Aorta (tissue), 5 donors: ENCODE measurements at regions of chr10 and their contacts with region 1.

Region 1: DNA sequence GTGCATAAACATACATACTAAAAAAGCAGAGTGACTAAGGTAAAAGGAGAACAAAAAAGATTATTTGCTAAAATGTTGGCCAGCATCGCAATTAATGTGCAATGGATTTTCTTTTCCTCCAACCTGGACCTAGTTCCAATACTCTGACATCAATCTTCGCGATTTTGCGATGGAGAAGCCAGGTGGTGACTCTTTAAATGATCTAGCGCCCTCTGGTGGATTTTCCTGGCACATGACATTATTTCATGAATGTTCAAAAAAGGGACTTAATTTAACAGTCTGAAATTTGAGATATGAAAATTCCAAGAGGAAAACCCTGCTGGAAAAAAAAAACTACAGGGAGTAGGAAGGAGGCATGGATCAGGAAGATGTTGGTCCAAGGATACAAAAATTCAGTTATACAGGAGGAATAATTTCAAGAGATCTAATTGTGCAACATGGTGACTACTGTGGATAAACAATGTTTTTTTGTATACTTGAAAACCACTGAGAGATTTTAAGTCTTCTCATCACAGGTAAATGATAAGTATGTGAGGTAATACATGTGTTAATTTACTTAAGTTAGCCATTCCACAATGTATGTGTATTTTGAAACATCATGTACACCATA is 4.3 kb upstream of the KCNMA1 start:
- DNase-seq: peak in 1 of 2 donors; percentile 59
- ATAC-seq: peak; percentile 55
- H3K4me3 ChIP-seq: no peak overlapping the region
- H3K27ac ChIP-seq: no peak overlapping the region
- H3K4me1 ChIP-seq: peaks cover 0 to 5% of the 10 kb centered on the region in 2 donors
- H3K27me3 ChIP-seq: no peaks in the 10 kb centered on the region

Region 2: DNA sequence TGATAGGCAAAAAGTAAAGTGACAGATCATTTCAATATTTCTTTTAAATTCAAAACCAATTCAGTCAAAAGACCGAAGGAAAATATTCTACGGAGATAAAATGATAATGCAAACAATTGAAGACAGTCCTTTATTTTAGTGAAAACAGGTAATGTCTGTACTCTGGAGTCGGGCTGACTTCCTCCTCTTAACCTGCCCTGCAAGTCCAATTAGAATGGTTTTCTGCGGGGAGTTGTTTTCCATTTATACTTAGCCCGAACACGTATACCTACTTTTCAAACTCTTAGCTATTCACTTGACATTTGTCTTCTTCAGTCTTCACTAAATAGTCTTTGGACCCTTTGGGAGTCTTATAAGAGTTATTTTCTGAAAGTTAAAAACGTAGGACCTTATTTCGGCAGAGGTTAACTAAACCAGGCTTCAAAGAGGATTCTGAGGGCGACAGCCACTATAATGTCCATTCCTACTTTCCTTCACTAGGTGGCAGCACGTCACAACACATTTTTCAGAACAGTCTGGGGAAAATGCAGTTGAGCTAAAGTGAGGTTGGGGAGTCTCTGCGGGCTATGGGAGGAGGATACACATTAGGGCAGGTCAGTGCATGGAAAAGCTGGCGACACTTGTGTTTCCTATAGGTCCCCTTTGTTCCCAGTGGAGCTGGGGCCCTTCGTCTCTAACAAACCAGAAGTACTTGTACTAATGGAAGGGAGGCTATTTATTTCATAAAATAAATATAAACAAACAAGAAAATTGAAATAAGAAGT is 476.3 kb before region 1 on chr10:
- intact Hi-C with region 1: loop called (anchors 1 to 2 kb)
- DNase-seq: no peak
- ATAC-seq: peak; percentile 80
- H3K4me3 ChIP-seq: peak overlapping the region in 1 of 2 donors; percentile 28
- H3K27ac ChIP-seq: no peak overlapping the region
- H3K4me1 ChIP-seq: peaks cover 5 to 11% of the 10 kb centered on the region in 2 donors
- H3K27me3 ChIP-seq: no peaks in the 10 kb centered on the region

Region 3: GRCh38 chr10:77251297-77252013 is 390.4 kb before region 1 on chr10:
- intact Hi-C with region 1: loop called in 1 of 2 experiments (anchors 5 kb)
- DNase-seq: no peak
- ATAC-seq: no peak
- H3K4me3 ChIP-seq: no peak overlapping the region
- H3K27ac ChIP-seq: no peak overlapping the region
- H3K4me1 ChIP-seq: peaks cover 3 to 8% of the 10 kb centered on the region in 2 donors
- H3K27me3 ChIP-seq: no peaks in the 10 kb centered on the region

Region 4: GRCh38 chr10:77428691-77429395 is 213.1 kb before region 1 on chr10:
- intact Hi-C with region 1: loop called in 1 of 2 experiments (anchors 10 kb)
- DNase-seq: peak; percentile 80 to 81
- ATAC-seq: peak; percentile 85
- H3K4me3 ChIP-seq: no peak overlapping the region
- H3K27ac ChIP-seq: peak overlapping the region in 1 of 2 donors; percentile 30
- H3K4me1 ChIP-seq: peaks cover 3 to 5% of the 10 kb centered on the region in 2 donors
- H3K27me3 ChIP-seq: no peaks in the 10 kb centered on the region

Region 5: GRCh38 chr10:77531441-77532001 is 110.4 kb before region 1 on chr10:
- intact Hi-C with region 1: loop called in 1 of 2 experiments (anchors 10 kb)
- DNase-seq: peak; percentile 85 to 89
- ATAC-seq: peak; percentile 75
- H3K4me3 ChIP-seq: no peak overlapping the region
- H3K27ac ChIP-seq: peak overlapping the region in 1 of 2 donors; percentile 81
- H3K4me1 ChIP-seq: peaks cover 0 to 4% of the 10 kb centered on the region in 2 donors
- H3K27me3 ChIP-seq: no peaks in the 10 kb centered on the region

Region 6: DNA sequence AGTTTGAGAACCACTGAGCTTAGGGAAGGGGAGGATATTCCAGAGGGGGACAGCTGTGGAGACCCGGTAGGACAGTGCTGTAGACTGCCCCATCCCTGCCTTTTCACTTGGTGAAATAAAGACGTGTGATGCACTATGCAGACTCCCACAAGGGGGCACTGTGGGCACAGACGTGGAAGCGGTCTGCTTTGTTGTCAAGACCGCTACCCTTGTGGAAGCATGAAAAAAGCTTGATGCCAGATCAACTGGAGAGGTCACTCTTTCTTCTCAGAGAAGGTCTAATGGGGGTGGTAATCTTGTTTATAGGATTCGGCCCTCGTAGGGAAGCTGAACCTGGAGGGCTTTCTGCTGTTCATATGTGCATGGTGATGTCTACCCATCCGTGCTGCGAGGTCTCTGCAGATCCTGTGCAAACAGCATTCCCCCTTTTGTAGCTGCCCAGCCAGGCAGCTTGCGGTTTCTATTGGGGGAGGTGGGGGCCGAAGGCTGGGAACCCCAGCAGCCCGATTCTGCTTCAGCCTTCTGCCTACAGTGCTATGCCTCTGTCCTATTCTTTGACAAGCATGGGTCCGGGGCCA is 405.5 kb after region 1 on chr10:
- intact Hi-C with region 1: no loop called
- DNase-seq: peak; percentile 90 to 95
- ATAC-seq: peak; percentile 86
- H3K4me3 ChIP-seq: no peak overlapping the region
- H3K27ac ChIP-seq: no peak overlapping the region
- H3K4me1 ChIP-seq: no peaks in the 10 kb centered on the region
- H3K27me3 ChIP-seq: no peaks in the 10 kb centered on the region